Breast epithelium (tissue), 4 donors: ENCODE measurements at regions of chr2 and their contacts with region 1.

Region 1: GRCh38 chr2:165837122-165837521 is 43.1 kb upstream of the GALNT3 start:
- DNase-seq: no peak
- H3K4me3 ChIP-seq: no peak overlapping the region
- H3K27ac ChIP-seq: no peak overlapping the region
- H3K4me1 ChIP-seq: no peaks in the 10 kb centered on the region
- H3K27me3 ChIP-seq: no peaks in the 10 kb centered on the region
- CTCF ChIP-seq: no peak
- POLR2A ChIP-seq: no peak

Region 2: DNA sequence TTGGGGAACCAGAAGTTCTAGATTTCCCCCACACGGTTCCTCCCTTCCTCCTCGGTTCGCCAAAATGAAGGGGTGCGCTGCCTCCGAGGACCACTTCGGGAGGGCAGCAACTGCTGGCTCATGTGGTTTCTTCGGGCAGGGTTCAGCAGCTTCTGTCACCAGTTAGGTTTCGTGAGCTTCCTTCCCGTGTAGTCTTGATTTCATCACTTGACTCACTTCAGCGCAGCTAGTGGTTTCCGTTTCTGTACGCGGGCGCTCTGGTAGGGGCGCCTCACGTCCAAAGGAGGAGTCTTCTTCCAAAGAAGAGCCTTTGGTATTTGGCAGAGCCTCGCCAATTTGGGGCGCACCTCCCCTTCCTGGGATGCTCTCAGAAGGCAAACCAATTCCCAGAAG is 42.6 kb before region 1 on chr2:
- intact Hi-C with region 1: no loop called
- DNase-seq: peak; percentile 52 to 66
- H3K4me3 ChIP-seq: peak overlapping the region; percentile 43 to 73 (median 70)
- H3K27ac ChIP-seq: peak overlapping the region; percentile 93 to 97
- H3K4me1 ChIP-seq: no peaks in the 10 kb centered on the region
- H3K27me3 ChIP-seq: no peaks in the 10 kb centered on the region
- CTCF ChIP-seq: no peak
- POLR2A ChIP-seq: no peak

Region 3: GRCh38 chr2:166234112-166234846 is 397.2 kb after region 1 on chr2:
- intact Hi-C with region 1: loop called (anchors 5 kb)
- DNase-seq: no peak
- H3K4me3 ChIP-seq: no peak overlapping the region
- H3K27ac ChIP-seq: no peak overlapping the region
- H3K4me1 ChIP-seq: no peaks in the 10 kb centered on the region
- H3K27me3 ChIP-seq: no peaks in the 10 kb centered on the region
- CTCF ChIP-seq: no peak
- POLR2A ChIP-seq: no peak